Activated B cell treated with CpG ODN at 0.5 μM for 24 hours (primary cell): ENCODE measurements at regions of chr3 and their contacts with region 1.

Region 1: DNA sequence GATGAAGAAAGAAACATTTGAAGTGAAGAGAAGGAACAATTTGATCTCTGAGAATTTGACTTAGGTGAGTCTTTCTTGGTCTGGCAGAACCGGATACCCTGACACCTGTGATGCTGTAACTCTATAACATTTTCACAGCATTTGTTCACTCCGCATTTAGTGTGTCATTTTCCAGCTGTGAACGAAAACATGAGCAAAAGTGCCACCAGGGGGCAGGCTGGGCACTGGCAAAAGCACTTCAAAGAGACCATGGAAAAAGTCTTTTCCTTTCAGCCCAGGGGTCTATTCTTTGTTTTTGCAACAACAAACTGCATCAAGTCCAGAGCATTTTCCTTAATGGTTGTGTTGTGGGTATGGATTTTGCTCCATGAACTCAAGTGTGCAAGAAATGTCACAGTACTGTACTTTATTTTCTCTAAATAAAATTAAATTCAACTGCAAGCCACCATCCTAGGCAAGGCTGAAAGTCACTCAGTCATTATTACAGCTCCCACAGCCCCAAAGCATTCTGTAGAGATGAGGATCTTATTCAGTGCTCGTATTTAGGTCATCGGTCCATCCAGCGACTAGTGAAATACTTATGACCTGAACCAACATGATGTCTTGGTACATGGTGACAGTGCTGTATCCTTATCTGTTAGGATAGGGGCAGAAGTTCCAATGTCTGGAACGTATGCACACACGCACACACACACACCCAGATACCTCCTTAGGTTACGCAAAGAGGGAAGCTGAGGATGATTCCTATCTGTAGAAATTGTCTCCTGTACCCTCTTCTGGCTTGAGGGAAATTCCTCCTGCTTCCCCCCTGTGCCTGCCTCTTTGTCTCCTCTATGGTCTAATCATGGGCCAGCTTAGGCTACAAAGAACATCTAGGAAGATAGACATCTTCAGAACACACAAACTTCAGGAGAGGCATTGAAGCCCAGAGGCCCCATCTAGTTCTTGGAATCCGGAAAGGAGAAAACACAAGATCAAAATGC is 125.5 kb downstream of the GADL1 start:
- DNase-seq: peak; percentile 27
- ATAC-seq: no peak
- H3K4me3 Mint-ChIP-seq: no peak overlapping the region
- H3K27ac Mint-ChIP-seq: no peak overlapping the region
- H3K4me1 Mint-ChIP-seq: no peaks in the 10 kb centered on the region
- H3K27me3 Mint-ChIP-seq: peaks cover 14% of the 10 kb centered on the region
- CTCF ChIP-seq: no peak

Region 2: GRCh38 chr3:30742796-30743619 is 26.0 kb before region 1 on chr3:
- CTCF ChIA-PET with region 1: no interaction called
- POLR2A ChIA-PET with region 1: no interaction called
- intact Hi-C with region 1: no loop called
- DNase-seq: no peak
- ATAC-seq: no peak
- H3K4me3 Mint-ChIP-seq: no peak overlapping the region
- H3K27ac Mint-ChIP-seq: no peak overlapping the region
- H3K4me1 Mint-ChIP-seq: peaks cover 6% of the 10 kb centered on the region
- H3K27me3 Mint-ChIP-seq: peaks cover 1% of the 10 kb centered on the region
- CTCF ChIP-seq: no peak

Region 3: GRCh38 chr3:31768479-31769123 is 999.6 kb after region 1 on chr3:
- CTCF ChIA-PET with region 1: interaction called, 6 read pairs
- POLR2A ChIA-PET with region 1: no interaction called
- intact Hi-C with region 1: loop called (anchors 1 kb)
- DNase-seq: no peak
- ATAC-seq: no peak
- H3K4me3 Mint-ChIP-seq: no peak overlapping the region
- H3K27ac Mint-ChIP-seq: peak overlapping the region; percentile 37
- H3K4me1 Mint-ChIP-seq: peaks cover 68% of the 10 kb centered on the region
- H3K27me3 Mint-ChIP-seq: no peaks in the 10 kb centered on the region
- CTCF ChIP-seq: no peak

Region 4: GRCh38 chr3:32340039-32340438 is 1571.0 kb after region 1 on chr3:
- CTCF ChIA-PET with region 1: no interaction called
- POLR2A ChIA-PET with region 1: no interaction called
- intact Hi-C with region 1: loop called (anchors 5 kb)
- DNase-seq: no peak
- ATAC-seq: no peak
- H3K4me3 Mint-ChIP-seq: no peak overlapping the region
- H3K27ac Mint-ChIP-seq: no peak overlapping the region
- H3K4me1 Mint-ChIP-seq: no peaks in the 10 kb centered on the region
- H3K27me3 Mint-ChIP-seq: no peaks in the 10 kb centered on the region
- CTCF ChIP-seq: no peak